Activated B cell treated with CpG ODN at 0.5 μM for 24 hours (primary cell): ENCODE measurements at regions of chr5 and their contacts with region 1.

Region 1: DNA sequence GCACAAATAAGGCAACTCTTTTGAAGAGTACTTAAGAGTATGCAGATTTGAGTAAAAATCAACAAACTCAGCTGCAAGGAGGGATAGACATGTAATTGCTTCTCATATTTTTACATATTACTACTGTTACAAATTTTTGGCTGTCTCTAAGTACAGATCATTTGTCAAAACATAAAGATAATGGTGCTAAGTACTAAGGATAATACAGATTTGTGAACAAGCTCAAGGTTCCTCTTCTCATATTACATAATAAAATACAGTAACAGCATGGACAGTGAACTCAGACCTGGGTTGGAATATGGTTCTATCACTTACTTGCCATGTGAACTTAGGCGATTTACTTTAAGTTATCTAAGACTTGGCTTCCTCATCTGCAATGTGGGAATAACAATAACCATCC is 168.0 kb downstream of the AP3B1 start:
- DNase-seq: no peak
- ATAC-seq: no peak
- H3K4me3 Mint-ChIP-seq: no peak overlapping the region
- H3K27ac Mint-ChIP-seq: no peak overlapping the region
- H3K4me1 Mint-ChIP-seq: no peaks in the 10 kb centered on the region
- H3K27me3 Mint-ChIP-seq: no peaks in the 10 kb centered on the region
- CTCF ChIP-seq: no peak

Region 2: GRCh38 chr5:78416677-78417425 is 290.3 kb after region 1 on chr5:
- CTCF ChIA-PET with region 1: no interaction called
- POLR2A ChIA-PET with region 1: interaction called, 14 read pairs
- intact Hi-C with region 1: no loop called
- DNase-seq: no peak
- ATAC-seq: no peak
- H3K4me3 Mint-ChIP-seq: no peak overlapping the region
- H3K27ac Mint-ChIP-seq: no peak overlapping the region
- H3K4me1 Mint-ChIP-seq: no peaks in the 10 kb centered on the region
- H3K27me3 Mint-ChIP-seq: no peaks in the 10 kb centered on the region
- CTCF ChIP-seq: no peak